Naive thymus-derived CD4-positive, alpha-beta T cell (primary cell): ENCODE measurements at regions of chr1 and their contacts with region 1.

Region 1: GRCh38 chr1:31944205-31945089 is 6.3 kb upstream of the PTP4A2 start:
- DNase-seq: peak; percentile 48 to 88 (median 87)
- ATAC-seq: peak; percentile 81
- H3K4me3 ChIP-seq: peak overlapping the region; percentile 68
- H3K4me3 Mint-ChIP-seq: peak overlapping the region; percentile 83 to 93 (median 89)
- H3K27ac ChIP-seq: peak overlapping the region; percentile 76
- H3K27ac Mint-ChIP-seq: peak overlapping the region; percentile 92 to 97 (median 94)
- H3K4me1 ChIP-seq: peaks cover 45 to 46% of the 10 kb centered on the region in 2 donors
- H3K4me1 Mint-ChIP-seq: peaks cover 33 to 64% (median 47%) of the 10 kb centered on the region in 7 donors
- H3K27me3 ChIP-seq: no peaks in the 10 kb centered on the region
- H3K27me3 Mint-ChIP-seq: no peaks in the 10 kb centered on the region

Region 2: DNA sequence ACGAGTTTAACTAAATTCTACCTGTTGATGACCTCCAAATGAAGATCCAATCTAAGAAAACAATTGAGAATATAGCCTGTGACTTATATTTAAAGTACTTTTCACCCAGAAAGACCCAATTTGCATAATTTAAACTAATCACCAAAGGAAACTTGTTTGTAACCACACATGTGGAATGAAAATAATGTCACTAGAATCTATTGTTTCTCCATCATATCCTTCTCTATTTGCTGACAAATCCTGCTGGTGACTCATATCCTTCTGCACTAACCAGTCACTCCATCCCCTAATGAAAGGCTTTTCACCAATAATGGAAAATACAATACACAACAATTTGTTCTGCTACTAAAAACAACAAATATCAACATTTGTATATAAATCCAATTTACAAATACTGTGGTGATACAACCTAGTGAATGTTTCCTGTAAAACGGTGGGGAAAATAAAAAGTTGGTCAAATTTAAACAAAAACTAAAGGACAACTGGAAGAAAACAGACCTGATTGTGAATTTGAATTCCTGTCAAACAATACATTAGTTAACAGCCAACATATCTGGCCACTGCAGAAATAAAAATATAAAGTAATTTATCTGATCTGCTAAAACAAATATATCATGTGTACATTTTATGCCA is 12.7 kb before region 1 on chr1:
- CTCF ChIA-PET with region 1: interaction called, 5 read pairs
- POLR2A ChIA-PET with region 1: interaction called, 248 read pairs
- intact Hi-C with region 1: loop called in 1 of 2 experiments (anchors 1 kb)
- DNase-seq: no peak
- ATAC-seq: peak; percentile 44
- H3K4me3 ChIP-seq: peak overlapping the region; percentile 33
- H3K4me3 Mint-ChIP-seq: peak overlapping the region; percentile 49 to 100 (median 94)
- H3K27ac ChIP-seq: peak overlapping the region; percentile 81
- H3K27ac Mint-ChIP-seq: peak overlapping the region; percentile 68 to 95 (median 91)
- H3K4me1 ChIP-seq: peaks cover 72 to 79% of the 10 kb centered on the region in 2 donors
- H3K4me1 Mint-ChIP-seq: peaks cover 70 to 99% (median 90%) of the 10 kb centered on the region in 7 donors
- H3K27me3 ChIP-seq: no peaks in the 10 kb centered on the region
- H3K27me3 Mint-ChIP-seq: no peaks in the 10 kb centered on the region

Region 3: DNA sequence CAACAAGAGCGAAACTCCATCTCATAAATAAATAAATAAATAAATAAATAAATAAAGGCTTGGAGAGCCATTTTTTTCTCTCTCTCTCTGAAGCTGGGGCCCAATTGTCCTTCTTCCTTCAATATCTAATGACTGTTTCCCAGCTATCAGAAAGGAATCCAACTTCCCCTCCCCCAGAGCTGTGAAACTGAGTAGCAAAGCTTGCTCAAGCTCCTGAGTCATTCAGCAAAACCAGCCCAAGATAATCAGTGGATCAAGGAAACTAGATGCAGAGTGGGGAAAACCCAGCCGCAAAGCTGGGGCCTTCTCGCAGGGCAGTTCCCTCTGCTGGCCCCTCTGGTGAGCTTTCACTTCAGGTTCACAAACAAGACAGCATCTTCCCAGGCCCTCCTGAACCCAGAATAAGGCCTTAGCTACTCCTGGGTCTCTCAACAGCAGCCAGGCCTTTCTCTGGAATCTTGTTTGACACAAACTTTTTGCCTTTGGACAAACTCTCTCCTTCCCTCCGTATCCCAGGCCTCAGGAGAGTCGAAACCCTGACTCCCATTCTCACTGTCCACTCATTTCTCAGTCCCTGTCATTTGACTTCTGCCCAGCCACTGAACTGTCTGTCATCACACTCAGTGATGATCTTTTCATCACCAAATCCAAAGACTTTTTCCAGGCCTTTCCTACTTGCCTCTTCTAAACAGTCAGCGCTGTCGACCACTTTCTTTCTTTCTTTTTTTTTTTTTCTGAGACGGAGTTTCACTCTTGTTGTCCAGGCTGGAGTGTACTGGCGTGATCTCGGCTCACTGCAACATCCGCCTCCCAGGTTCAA is 11.7 kb after region 1 on chr1:
- CTCF ChIA-PET with region 1: interaction called, 52 read pairs
- POLR2A ChIA-PET with region 1: interaction called, 248 read pairs
- intact Hi-C with region 1: loop called (anchors 1 kb)
- DNase-seq: peak in 7 of 9 donors; percentile 31 to 79 (median 51)
- ATAC-seq: peak; percentile 93
- H3K4me3 ChIP-seq: no peak overlapping the region
- H3K4me3 Mint-ChIP-seq: peak overlapping the region; percentile 10 to 79 (median 59)
- H3K27ac ChIP-seq: peak overlapping the region; percentile 8
- H3K27ac Mint-ChIP-seq: peak overlapping the region; percentile 15 to 91 (median 83)
- H3K4me1 ChIP-seq: peaks cover 31 to 42% of the 10 kb centered on the region in 2 donors
- H3K4me1 Mint-ChIP-seq: peaks cover 45 to 76% (median 73%) of the 10 kb centered on the region in 7 donors
- H3K27me3 ChIP-seq: no peaks in the 10 kb centered on the region
- H3K27me3 Mint-ChIP-seq: no peaks in the 10 kb centered on the region

Region 4: GRCh38 chr1:31961536-31961935 is 17.1 kb after region 1 on chr1:
- CTCF ChIA-PET with region 1: interaction called, 52 read pairs
- POLR2A ChIA-PET with region 1: interaction called, 248 read pairs
- intact Hi-C with region 1: loop called (anchors 1 kb)
- DNase-seq: no peak
- ATAC-seq: no peak
- H3K4me3 ChIP-seq: no peak overlapping the region
- H3K4me3 Mint-ChIP-seq: peak overlapping the region; percentile 5 to 74 (median 56)
- H3K27ac ChIP-seq: no peak overlapping the region
- H3K27ac Mint-ChIP-seq: peak overlapping the region; percentile 44 to 94 (median 77)
- H3K4me1 ChIP-seq: peaks cover 8 to 34% of the 10 kb centered on the region in 2 donors
- H3K4me1 Mint-ChIP-seq: peaks cover 38 to 65% (median 61%) of the 10 kb centered on the region in 7 donors
- H3K27me3 ChIP-seq: no peaks in the 10 kb centered on the region
- H3K27me3 Mint-ChIP-seq: no peaks in the 10 kb centered on the region